ENCODE measurements at regions of chr12 and their contacts with region 1.

Region 1: DNA sequence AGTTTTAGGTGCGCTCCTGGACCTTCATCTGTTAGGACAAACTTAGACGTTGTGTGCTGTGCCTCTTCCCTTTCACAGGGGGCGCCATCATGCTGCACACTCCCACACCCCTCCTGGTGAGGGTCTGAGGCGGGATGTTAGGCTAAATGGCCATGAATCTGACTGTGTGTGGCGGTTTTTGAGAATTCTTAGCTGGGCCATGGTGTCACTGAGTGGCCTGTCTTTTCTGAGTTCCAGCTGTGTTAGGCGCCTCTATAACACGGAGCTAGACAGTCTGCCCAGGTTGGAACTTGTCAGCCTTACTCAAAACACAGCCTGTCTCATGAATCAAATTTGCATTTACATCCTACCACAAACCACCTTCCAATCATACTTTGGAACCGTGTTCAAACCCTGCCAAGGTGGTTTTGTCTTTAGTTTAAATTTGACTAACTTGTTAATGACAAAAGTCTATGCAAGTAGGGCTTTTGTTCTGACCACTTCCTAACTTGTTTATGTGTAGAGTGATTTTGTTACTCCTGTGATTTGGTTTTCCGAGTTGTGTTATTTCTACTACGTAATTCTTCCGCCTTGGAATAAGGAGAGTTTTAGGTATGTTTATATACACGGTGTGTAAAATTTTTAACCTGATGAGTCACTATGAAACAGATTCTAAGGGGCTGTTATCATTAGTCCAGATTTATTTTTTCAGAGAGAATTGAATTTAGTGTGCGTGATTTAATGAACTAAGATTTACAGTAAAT is 19.6 kb downstream of the ACVR1B start:
- DNase-seq: peak in 7 of 14 experiments; percentile 2 to 70 (median 33)
- ATAC-seq: peak; percentile 71
- H3K4me3 ChIP-seq: no peak overlapping the region
- H3K4me3 Mint-ChIP-seq: peak overlapping the region; percentile 72
- H3K27ac ChIP-seq: no peak overlapping the region
- H3K27ac Mint-ChIP-seq: peak overlapping the region; percentile 67
- H3K4me1 ChIP-seq: peaks cover 57% of the 10 kb centered on the region
- H3K4me1 Mint-ChIP-seq: peaks cover 72% of the 10 kb centered on the region
- H3K27me3 ChIP-seq: no peaks in the 10 kb centered on the region
- H3K27me3 Mint-ChIP-seq: no peaks in the 10 kb centered on the region
- CTCF ChIP-seq: peak; percentile 67

Region 2: GRCh38 chr12:51959211-51959610 is 11.9 kb before region 1 on chr12:
- CTCF ChIA-PET with region 1: interaction called, 13 read pairs
- POLR2A ChIA-PET with region 1: interaction called, 19 read pairs
- intact Hi-C with region 1: loop called in 1 of 2 experiments (anchors 2 kb)
- DNase-seq: no peak
- ATAC-seq: no peak
- H3K4me3 ChIP-seq: no peak overlapping the region
- H3K4me3 Mint-ChIP-seq: no peak overlapping the region
- H3K27ac ChIP-seq: no peak overlapping the region
- H3K27ac Mint-ChIP-seq: peak overlapping the region; percentile 16
- H3K4me1 ChIP-seq: peaks cover 4% of the 10 kb centered on the region
- H3K4me1 Mint-ChIP-seq: peaks cover 66% of the 10 kb centered on the region
- H3K27me3 ChIP-seq: no peaks in the 10 kb centered on the region
- H3K27me3 Mint-ChIP-seq: no peaks in the 10 kb centered on the region
- CTCF ChIP-seq: no peak